SK-N-SH (cell line): ENCODE measurements at regions of chr17 and their contacts with region 1.

Region 1: DNA sequence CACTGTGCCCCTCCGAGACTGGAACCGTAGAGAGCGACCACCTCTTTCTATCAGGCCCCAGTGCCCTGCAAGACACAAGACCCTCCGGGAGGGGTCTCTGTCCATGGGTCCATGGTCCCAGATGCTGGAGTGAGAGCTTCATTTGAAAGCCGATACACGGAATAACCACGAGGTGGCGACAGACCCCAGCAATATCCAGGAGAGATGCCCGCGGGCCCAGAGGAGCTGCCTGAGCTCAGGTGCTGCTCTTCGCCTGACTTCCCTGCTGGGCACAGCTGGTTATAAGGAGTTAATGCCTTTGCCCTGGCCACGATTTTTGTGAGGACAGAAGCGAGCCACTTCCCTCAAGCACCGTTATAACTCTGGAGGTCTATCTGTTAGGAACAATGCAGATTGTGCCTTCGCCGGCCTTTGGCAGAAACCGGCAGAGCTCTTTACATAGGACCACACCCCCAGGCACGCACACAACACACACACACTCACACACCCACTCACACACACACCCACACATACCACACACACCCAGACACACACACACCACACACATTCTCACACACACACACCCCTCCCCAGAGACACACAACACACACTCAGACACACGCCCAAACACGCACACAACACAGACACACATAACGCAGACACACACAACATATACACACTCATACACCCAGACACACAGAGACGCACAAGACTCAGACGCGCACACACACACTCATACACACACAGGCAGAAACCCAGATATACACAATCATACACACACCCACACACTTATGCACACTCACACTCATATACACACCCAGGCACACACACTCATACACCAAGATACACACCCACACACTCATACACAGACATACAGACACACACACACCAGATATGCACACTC is 436.4 kb downstream of the SOX9 start:
- DNase-seq: peak; percentile 91
- H3K4me3 ChIP-seq: no peak overlapping the region; a peak in 1 of 4 replicates
- H3K27ac ChIP-seq: no peak overlapping the region
- H3K4me1 ChIP-seq: no peaks in the 10 kb centered on the region
- H3K27me3 ChIP-seq: no peaks in the 10 kb centered on the region
- CTCF ChIP-seq: peak; percentile 98
- EP300 ChIP-seq: no peak
- RAD21 ChIP-seq: peak; percentile 93

Region 2: GRCh38 chr17:72545766-72546165 is 11.4 kb before region 1 on chr17:
- CTCF ChIA-PET with region 1: interaction called, 26 read pairs
- POLR2A ChIA-PET with region 1: no interaction called
- DNase-seq: no peak
- H3K4me3 ChIP-seq: no peak overlapping the region
- H3K27ac ChIP-seq: no peak overlapping the region
- H3K4me1 ChIP-seq: peaks cover 0 to under 1% of the 10 kb centered on the region in 2 experiments; a peak in 1 of 4 replicates
- H3K27me3 ChIP-seq: no peaks in the 10 kb centered on the region
- CTCF ChIP-seq: no peak
- EP300 ChIP-seq: no peak
- RAD21 ChIP-seq: no peak

Region 3: GRCh38 chr17:72609501-72609900 is 52.3 kb after region 1 on chr17:
- CTCF ChIA-PET with region 1: interaction called, 14 read pairs
- POLR2A ChIA-PET with region 1: no interaction called
- DNase-seq: no peak
- H3K4me3 ChIP-seq: no peak overlapping the region
- H3K27ac ChIP-seq: no peak overlapping the region; a peak in 1 of 4 replicates
- H3K4me1 ChIP-seq: peaks cover 0 to 11% of the 10 kb centered on the region in 2 experiments; a peak in 1 of 4 replicates
- H3K27me3 ChIP-seq: no peaks in the 10 kb centered on the region
- CTCF ChIP-seq: no peak
- EP300 ChIP-seq: no peak
- RAD21 ChIP-seq: no peak

Region 4: GRCh38 chr17:72656130-72656763 is 99.1 kb after region 1 on chr17:
- CTCF ChIA-PET with region 1: interaction called, 13 read pairs
- POLR2A ChIA-PET with region 1: no interaction called
- DNase-seq: no peak
- H3K4me3 ChIP-seq: no peak overlapping the region
- H3K27ac ChIP-seq: no peak overlapping the region
- H3K4me1 ChIP-seq: peaks cover 3 to 5% of the 10 kb centered on the region in 2 experiments; a peak in 2 of 4 replicates
- H3K27me3 ChIP-seq: no peaks in the 10 kb centered on the region
- CTCF ChIP-seq: no peak
- EP300 ChIP-seq: no peak
- RAD21 ChIP-seq: no peak

Region 5: GRCh38 chr17:72705905-72706395 is 148.8 kb after region 1 on chr17:
- CTCF ChIA-PET with region 1: interaction called, 42 read pairs
- POLR2A ChIA-PET with region 1: no interaction called
- DNase-seq: no peak
- H3K4me3 ChIP-seq: no peak overlapping the region
- H3K27ac ChIP-seq: no peak overlapping the region
- H3K4me1 ChIP-seq: peaks cover 0 to 6% of the 10 kb centered on the region in 2 experiments; a peak in 1 of 4 replicates
- H3K27me3 ChIP-seq: no peaks in the 10 kb centered on the region
- CTCF ChIP-seq: no peak
- EP300 ChIP-seq: no peak
- RAD21 ChIP-seq: no peak

Region 6: DNA sequence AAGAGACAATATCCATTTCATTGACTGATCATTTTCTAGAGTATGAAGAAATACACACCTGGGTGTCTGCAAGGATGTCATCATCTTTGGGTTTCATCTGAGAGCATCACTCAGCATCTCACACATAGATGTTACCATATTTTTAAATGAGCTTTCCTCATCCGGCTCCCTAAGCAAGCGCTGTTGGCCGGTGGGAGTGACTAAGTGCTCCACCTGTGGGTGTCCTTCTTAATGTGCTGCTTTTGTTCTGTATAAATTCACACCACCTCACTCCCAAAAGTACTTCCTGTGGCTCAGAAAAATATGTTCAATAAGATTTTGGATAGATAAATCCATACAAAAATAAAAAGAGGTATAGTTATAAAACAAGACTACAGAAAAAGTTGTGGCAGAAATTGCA is 615.1 kb after region 1 on chr17:
- CTCF ChIA-PET with region 1: interaction called, 14 read pairs
- POLR2A ChIA-PET with region 1: no interaction called
- DNase-seq: no peak
- H3K4me3 ChIP-seq: no peak overlapping the region
- H3K27ac ChIP-seq: no peak overlapping the region
- H3K4me1 ChIP-seq: no peaks in the 10 kb centered on the region; a peak in 1 of 4 replicates
- H3K27me3 ChIP-seq: no peaks in the 10 kb centered on the region
- CTCF ChIP-seq: no peak
- EP300 ChIP-seq: no peak
- RAD21 ChIP-seq: no peak